Dorsolateral prefrontal cortex (tissue), 120 donors: ENCODE measurements at regions of chr13 and their contacts with region 1.

Region 1: GRCh38 chr13:30395192-30396084 is 26.9 kb upstream of the UBE2L5 start:
- DNase-seq: peak; percentile 62 to 99 (median 92)
- H3K4me3 ChIP-seq: peak overlapping the region; percentile 40 to 93 (median 69)
- H3K27ac ChIP-seq: peak overlapping the region; percentile 28 to 93 (median 79)
- H3K27me3 ChIP-seq: no peaks in the 10 kb centered on the region
- CTCF ChIP-seq: peak in 6 of 56 donors; percentile 19 to 34 (median 24)

Region 2: DNA sequence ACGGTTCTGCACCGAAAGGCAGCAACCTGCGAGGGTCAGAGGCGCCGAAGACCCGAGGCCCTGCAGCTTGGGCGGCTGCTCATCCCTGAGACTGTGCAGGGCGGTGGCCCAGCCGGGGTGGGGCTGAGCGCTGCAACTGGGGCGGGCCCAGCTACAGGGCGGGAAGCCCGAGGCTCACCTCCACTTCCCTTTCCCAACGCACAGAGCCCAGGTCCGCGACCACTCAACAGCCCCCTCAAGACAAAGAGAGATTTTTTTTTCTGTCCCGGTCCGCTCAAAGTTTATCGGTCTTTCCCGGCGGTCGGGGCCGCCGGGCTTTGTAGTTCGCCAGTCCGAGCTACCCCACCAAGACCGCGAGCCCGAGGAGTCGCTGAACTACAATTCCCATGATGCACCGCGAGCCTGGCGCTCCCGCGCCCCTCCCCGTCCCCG is 88.7 kb before region 1 on chr13:
- intact Hi-C with region 1: loop called in 1 of 2 experiments (anchors 2 kb)
- DNase-seq: peak; percentile 88 to 97 (median 93)
- H3K4me3 ChIP-seq: peak overlapping the region; percentile 74 to 99 (median 92)
- H3K27ac ChIP-seq: peak overlapping the region; percentile 41 to 97 (median 93)
- H3K27me3 ChIP-seq: no peaks in the 10 kb centered on the region
- CTCF ChIP-seq: peak in 17 of 56 donors; percentile 3 to 40 (median 15)

Region 3: DNA sequence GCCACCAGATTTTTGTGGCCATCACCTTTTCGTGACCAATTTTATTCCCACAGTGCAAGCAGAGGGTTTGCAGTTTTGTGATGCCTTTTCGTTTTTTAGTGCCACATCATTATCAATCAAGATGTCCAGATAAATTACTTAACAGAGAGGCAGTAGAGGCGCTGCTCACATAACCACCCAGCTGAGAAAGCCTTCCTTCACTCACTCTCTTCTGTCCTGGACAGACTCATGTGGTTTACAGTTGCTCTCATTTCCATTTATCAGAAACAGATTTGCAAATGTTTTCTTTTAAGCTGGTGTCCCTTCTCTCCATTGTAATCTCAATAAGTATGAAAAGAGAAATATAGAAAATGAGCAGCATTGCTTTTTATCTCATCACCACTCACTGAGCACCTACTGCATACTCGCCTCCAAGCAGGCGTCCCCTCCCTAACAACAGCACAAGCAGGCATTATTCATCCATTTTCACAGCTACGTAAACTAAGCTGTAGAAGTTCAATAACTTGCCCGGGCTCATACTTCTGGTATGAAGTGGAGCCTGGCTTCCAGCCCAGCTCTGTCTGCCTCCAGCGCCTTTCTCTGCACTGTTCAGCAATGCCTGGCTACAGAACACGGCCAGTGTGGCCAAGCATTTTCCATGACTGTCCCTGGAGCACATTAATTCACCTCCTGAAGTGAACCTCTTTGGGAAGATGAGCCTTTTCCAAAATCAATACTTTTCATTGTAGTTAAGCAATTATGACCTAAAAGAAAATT is 53.4 kb before region 1 on chr13:
- intact Hi-C with region 1: loop called in 1 of 2 experiments (anchors 5 kb)
- DNase-seq: peak; percentile 13 to 75 (median 62)
- H3K4me3 ChIP-seq: peak overlapping the region in 21 of 59 donors; percentile 2 to 49 (median 26)
- H3K27ac ChIP-seq: peak overlapping the region in 19 of 59 donors; percentile 0 to 87 (median 39)
- H3K27me3 ChIP-seq: no peaks in the 10 kb centered on the region
- CTCF ChIP-seq: no peak

Region 4: DNA sequence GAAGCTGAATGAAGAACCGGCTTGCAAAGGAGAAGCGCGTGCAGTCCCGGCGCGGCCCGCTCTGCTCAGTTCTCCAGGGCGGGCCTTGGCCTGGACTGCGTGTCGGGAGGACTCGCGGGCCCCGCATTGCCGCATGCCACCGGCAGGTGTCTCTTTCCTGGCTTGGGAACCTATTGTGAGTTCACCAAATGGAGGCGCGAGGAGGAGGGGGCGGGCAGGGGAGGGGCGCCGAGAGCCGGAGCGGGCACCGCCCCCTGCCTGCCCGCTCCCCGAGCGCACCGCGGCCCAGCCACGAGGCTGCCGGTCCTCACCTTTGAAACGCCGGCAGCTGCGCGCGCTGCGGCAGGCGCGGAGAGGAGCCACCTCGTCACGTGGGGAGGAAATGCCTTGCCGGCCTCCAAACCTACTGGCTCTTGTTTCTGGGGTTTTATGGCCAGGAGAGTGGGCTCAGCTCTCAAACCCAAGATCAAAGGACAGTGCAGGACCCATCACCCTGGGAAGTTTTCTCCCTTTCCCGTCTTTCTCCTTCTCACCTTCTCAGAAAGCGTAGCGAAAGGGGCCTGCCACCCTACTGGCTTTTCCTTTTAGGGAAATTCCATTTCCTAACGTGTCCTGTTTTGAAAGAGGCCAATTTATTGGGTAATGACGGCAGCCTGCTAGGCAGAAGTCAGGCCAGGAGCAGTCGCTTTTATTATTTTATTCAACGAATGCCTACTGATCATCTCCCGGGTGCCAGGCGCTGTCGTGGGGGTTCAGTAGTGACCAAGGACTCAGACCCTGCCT is 13.1 kb after region 1 on chr13:
- intact Hi-C with region 1: loop called (anchors 2 kb)
- DNase-seq: peak; percentile 85 to 92 (median 90)
- H3K4me3 ChIP-seq: peak overlapping the region; percentile 27 to 71 (median 56)
- H3K27ac ChIP-seq: peak overlapping the region; percentile 1 to 93 (median 82)
- H3K27me3 ChIP-seq: no peaks in the 10 kb centered on the region
- CTCF ChIP-seq: peak; percentile 44 to 91 (median 77)

Region 5: GRCh38 chr13:30818323-30818960 is 423.0 kb after region 1 on chr13:
- intact Hi-C with region 1: no loop called
- DNase-seq: no peak
- H3K4me3 ChIP-seq: no peak overlapping the region
- H3K27ac ChIP-seq: no peak overlapping the region
- H3K27me3 ChIP-seq: peaks cover 0 to 3% (median 0%) of the 10 kb centered on the region in 45 donors
- CTCF ChIP-seq: no peak

Region 6: DNA sequence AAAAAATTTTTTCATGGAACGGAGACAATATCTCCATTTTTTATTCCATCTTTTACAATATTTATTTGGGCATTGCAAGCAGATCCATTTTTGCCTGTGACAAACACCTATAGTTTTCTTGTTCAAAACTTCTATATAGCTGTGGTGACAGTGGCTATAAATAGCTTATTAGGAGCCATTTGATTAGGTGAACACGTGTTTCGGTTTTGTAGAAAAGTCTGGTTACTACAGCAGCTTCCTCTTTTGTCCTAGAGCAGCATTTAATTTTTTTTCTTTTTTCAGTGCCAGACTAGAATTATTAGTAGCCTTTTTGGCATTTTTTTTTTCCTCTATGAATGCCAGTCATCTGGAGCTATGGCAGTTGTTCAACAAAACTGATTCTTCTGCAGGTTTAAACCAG is 1467.4 kb after region 1 on chr13:
- intact Hi-C with region 1: no loop called
- DNase-seq: no peak
- H3K4me3 ChIP-seq: no peak overlapping the region
- H3K27ac ChIP-seq: no peak overlapping the region
- H3K27me3 ChIP-seq: peaks cover 0 to 3% (median 0%) of the 10 kb centered on the region in 45 donors
- CTCF ChIP-seq: no peak